ENCODE measurements at regions of chr17 and their contacts with region 1.

Region 1: GRCh38 chr17:8630802-8631553 is 453 bp upstream of the MYH10 start:
- DNase-seq: peak; percentile 93 to 99
- H3K4me3 ChIP-seq: peak overlapping the region; percentile 68 to 90
- H3K27ac ChIP-seq: peak overlapping the region; percentile 94 to 98
- H3K4me1 ChIP-seq: peaks cover 0 to 4% of the 10 kb centered on the region in 2 donors
- H3K27me3 ChIP-seq: no peaks in the 10 kb centered on the region
- CTCF ChIP-seq: peak in 2 of 3 experiments; percentile 9 to 37

Region 2: DNA sequence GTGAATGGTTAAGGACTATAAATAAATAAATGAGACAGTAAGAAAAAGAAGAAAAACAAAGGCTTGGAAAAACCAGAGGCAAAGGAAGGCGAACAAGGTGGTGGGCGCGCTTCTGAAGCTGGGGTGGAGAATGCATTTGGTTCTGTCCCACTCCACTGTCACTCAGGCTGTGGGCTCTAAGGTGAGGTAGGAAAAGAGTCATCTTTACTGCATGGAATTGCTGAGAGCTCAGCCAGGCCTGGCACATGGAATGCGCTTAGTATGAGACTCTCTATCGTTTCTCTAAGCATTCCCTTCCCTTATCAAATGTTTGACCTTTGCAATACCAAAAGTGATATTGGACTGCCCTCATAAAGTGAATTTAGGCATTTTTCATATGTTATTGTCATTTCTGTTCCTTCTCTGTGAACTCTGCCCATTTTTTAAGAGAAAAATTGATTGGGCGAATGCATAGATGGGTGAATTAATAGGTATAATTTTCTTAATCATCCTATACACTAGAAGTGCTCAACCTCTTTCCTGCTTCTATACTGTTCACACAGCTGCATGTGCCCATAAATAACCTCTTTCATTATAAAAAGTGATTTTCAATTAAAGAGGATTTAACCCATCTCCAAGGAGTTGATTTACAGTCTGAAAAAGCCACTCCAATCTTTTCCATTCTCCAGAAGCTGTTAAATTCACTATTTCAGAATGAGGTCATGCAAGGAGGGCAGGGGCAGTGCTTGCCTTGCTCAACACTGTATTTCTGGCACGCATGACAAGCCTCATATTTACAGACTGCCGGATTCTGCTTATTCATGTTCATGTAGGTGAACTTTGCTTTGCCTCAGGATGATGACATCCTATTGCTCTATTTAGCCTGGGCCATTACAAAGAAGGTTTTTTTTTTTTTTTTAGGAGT is 88.1 kb before region 1 on chr17:
- intact Hi-C with region 1: loop called (anchors 5 kb)
- DNase-seq: peak; percentile 29 to 88
- H3K4me3 ChIP-seq: no peak overlapping the region
- H3K27ac ChIP-seq: peak overlapping the region; percentile 9 to 63
- H3K4me1 ChIP-seq: peaks cover 0 to 3% of the 10 kb centered on the region in 2 donors
- H3K27me3 ChIP-seq: no peaks in the 10 kb centered on the region
- CTCF ChIP-seq: no peak

Region 3: GRCh38 chr17:8611619-8612298 is 19.2 kb before region 1 on chr17:
- intact Hi-C with region 1: loop called (anchors 2 kb)
- DNase-seq: no peak
- H3K4me3 ChIP-seq: peak overlapping the region; percentile 43 to 50
- H3K27ac ChIP-seq: peak overlapping the region; percentile 73 to 93
- H3K4me1 ChIP-seq: peaks cover 16 to 51% of the 10 kb centered on the region in 2 donors
- H3K27me3 ChIP-seq: no peaks in the 10 kb centered on the region
- CTCF ChIP-seq: no peak

Region 4: DNA sequence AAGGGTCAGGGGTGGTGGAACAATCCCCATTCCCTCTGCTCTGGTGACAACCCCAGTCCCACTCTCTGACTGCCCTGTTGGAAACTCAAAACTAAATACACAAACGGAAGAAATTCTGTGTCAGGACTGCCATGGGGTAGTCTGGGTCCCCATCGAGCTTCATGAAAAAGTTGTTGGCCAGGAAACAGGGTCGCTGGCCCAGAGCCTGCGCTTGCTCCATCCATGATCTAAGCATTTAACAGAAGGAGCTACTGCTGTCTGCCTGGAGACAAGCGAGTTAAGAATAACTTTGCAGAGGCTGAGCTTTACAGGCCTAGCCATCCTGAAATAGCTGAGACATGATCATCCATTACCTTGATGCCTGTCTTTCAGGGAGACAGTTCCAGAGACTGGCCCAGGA is 32.0 kb after region 1 on chr17:
- intact Hi-C with region 1: no loop called
- DNase-seq: peak in 1 of 2 donors; percentile 81
- H3K4me3 ChIP-seq: no peak overlapping the region
- H3K27ac ChIP-seq: peak overlapping the region; percentile 84 to 85
- H3K4me1 ChIP-seq: peaks cover 14 to 23% of the 10 kb centered on the region in 2 donors
- H3K27me3 ChIP-seq: no peaks in the 10 kb centered on the region
- CTCF ChIP-seq: no peak

Region 5: DNA sequence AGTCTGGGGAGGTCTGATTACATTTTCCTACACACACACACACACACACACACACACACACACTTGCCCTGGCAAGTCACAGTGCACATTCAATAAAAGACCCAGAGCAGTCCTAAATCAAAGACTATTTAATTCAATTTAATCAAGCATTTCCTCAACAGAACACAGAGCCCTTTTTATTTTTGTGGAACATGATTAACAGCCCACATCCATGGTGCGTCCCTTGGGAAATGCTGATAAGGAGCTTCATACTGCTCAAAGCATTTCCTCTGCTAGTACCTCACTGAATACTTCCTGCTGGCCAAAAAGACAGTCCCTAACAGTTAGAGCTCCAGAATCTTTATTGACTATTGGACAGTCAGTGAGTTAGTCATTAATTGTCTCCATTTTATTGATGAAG is 42.6 kb after region 1 on chr17:
- intact Hi-C with region 1: loop called (anchors 2 kb)
- DNase-seq: peak in 1 of 2 donors; percentile 85
- H3K4me3 ChIP-seq: peak overlapping the region in 1 of 2 donors; percentile 38
- H3K27ac ChIP-seq: peak overlapping the region; percentile 93 to 95
- H3K4me1 ChIP-seq: peaks cover 9 to 55% of the 10 kb centered on the region in 2 donors
- H3K27me3 ChIP-seq: no peaks in the 10 kb centered on the region
- CTCF ChIP-seq: no peak

Region 6: GRCh38 chr17:8745586-8746500 is 114.9 kb after region 1 on chr17:
- intact Hi-C with region 1: loop called (anchors 2 kb)
- DNase-seq: peak; percentile 30 to 87
- H3K4me3 ChIP-seq: peak overlapping the region; percentile 61 to 77
- H3K27ac ChIP-seq: peak overlapping the region; percentile 80 to 84
- H3K4me1 ChIP-seq: peaks cover 4 to 12% of the 10 kb centered on the region in 2 donors
- H3K27me3 ChIP-seq: no peaks in the 10 kb centered on the region
- CTCF ChIP-seq: peak; percentile 92 to 100 (median 95)